HEK293T (cell line): ENCODE measurements at regions of chr18 and their contacts with region 1.

Region 1: DNA sequence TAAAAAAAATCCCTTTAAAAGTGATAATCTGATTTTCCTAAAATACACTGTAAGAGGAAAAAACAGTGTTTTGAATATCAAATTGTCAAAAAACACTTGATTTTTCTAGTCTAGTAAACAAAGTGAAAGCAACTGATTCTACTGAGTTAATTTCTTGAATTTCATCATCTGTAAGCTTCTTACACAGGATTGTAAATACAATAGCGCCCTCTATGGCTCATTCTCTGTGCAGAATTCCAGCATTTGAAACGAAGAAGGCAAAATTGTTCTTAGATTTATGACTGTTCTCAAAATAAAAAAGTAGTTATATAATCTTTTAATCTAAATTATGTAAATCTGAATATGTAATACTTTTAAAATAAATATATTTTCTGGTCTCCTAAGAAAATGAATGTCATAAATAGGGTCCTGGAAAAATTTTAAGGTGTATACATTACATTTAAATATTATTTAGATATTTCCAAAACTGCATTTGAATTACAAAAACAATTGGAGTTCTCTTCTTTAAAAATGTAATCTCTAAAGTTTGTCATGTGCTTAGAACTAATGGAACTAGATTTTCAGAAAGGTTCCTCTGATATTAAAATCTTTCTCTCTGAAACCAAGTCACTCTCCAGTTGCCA is 176.9 kb upstream of the MC4R start:
- DNase-seq: peak; percentile 4

Region 2: GRCh38 chr18:59996370-59996966 is 553.0 kb before region 1 on chr18:
- CTCF ChIA-PET with region 1: interaction called, 10 read pairs
- POLR2A ChIA-PET with region 1: no interaction called
- DNase-seq: peak; percentile 23